HEK293T (cell line): ENCODE measurements at regions of chr13 and their contacts with region 1.

Region 1: DNA sequence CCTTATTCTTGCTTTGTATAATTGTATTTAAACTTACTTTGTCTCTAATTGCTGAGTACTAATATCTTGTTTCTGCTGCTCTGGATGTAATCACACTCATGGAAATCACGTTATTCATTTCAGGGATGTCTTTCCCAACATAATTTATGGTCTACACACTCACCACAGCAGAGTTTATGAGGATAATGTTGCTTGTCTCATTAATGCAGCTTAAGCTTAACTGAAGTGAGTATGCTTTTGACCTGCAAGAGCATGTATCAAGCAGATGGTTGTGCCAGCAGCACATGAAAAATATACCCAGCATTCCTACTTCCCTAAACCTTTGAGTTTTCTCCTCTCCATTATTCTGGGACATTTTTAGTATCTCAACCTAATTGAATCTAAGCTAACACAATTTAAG is 1080.9 kb downstream of the SLITRK5 start:
- DNase-seq: no peak

Region 2: DNA sequence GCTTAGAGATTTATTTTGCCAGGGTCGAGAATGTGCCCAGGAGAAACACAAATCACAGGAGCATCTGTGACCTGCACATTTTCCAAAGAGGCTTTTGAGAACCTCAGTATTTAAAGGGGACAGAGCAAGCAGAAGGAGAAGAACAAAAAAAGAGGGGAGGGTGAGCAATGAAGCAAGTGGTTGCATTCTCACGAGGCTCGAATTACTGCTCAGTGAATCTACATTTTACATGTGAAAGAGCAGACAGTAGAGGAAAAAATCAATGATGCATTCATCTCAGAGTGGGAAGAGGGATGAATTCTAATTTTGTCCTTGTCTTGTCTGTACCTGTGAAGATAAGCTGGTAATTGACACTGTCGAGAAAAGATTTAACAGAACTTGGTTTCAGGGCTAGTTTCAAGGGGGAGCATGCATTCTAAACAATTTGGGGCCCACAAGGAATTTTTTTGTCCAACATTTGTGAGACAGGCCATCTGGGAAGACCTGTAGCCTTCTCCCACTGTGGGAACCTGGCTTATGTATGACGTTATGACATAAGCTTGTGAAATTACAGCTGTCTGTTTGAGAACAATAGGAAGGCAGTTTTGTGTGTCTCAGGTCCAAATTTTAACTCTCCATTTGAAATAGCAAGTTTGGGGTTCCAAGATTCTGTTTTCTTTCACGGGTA is 225.7 kb before region 1 on chr13:
- CTCF ChIA-PET with region 1: interaction called, 10 read pairs
- POLR2A ChIA-PET with region 1: no interaction called
- DNase-seq: no peak

Region 3: DNA sequence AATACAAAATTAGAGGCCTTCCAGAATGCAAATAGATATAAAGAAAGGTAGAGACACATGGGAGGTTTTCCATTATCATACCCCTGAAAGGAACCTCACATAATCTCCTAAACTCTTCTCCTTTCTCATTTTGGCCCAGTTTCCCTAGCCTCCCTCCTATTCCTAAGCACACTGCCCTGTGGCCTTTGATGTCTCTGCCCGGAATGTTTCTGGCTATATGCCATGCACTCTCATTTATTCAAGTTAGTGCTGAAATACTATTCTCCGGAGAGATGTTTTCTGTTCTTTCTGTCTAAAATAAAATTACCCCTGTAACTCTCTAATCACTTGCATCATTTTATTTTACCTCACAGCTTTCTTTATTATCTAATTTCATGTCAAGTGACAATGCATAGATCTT is 206.8 kb after region 1 on chr13:
- CTCF ChIA-PET with region 1: no interaction called
- POLR2A ChIA-PET with region 1: no interaction called
- DNase-seq: no peak